IMR-90 (cell line): ENCODE measurements at regions of chr22 and their contacts with region 1.

Region 1: DNA sequence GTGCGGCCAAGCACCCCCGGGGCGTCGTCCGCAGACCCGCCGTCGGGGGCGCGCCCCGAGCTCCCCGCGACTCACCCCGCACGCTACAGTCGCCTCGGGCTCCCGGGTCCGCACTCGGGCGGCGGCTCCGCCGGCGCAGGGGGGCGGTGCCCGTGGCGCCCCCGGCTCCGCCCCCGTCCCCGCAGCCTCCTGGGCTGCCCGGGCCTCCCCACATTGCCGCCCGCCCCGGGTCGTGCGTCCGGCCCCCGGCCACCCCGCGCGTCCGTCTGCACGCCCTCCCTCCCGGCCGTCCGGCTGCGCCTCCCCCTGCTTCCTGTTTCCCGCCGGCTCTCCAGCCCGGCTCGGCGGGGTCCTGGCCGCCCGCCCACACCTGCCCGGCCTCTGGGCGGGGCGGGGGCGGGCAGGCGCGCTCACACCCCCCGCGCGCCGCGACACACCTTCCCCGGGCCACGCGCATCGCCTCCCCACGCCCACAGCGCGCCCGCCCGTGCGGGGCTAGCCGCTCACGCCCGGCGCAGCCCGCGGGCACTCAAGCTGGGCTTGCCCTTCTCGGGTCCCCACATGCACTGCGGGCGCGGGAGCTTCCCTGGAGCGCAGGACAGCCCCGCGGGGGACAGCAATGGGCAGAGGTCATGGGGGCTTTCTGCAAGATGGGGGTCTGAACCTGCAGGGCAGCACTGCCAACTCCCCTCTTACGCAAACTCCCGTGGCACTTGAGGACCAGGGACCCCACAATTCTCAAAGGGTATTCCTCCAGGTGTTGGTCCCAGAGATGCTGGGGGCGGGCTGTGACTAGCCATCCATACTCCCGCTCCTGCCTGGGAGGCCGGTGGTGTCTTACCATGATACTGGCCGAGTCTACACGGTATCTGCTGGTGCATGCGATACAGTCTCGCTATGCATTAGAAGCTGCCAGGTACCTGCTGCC is at the start of gene CARD10:
- DNase-seq: no peak
- ATAC-seq: peak; percentile 83
- H3K4me3 ChIP-seq: peak within 1 kb of the TSS; percentile 86
- H3K27ac ChIP-seq: peak within 1 kb of the TSS; percentile 12; the same call in 1 of the 2 replicates
- H3K4me1 ChIP-seq: peaks cover 9% of the 10 kb centered on the region
- H3K27me3 ChIP-seq: no peaks in the 10 kb centered on the region
- CTCF ChIP-seq: no peak
- POLR2A ChIP-seq: 0 out of 2 replicates have a peak, but pooled peaks have one; percentile 28
- RAD21 ChIP-seq: no peak
- total RNA-seq, gene CARD10: 6.1 TPM in 2 replicates

Region 2: GRCh38 chr22:37472418-37473006 is 47.0 kb before region 1 on chr22:
- CTCF ChIA-PET with region 1: interaction called, 3 read pairs
- POLR2A ChIA-PET with region 1: no interaction called
- dilution Hi-C with region 1: no loop called
- in situ Hi-C with region 1: no loop called
- intact Hi-C with region 1: loop called (anchors 1 kb)
- DNase-seq: peak; percentile 28
- ATAC-seq: peak; percentile 50; the same call in 1 of the 2 replicates
- H3K4me3 ChIP-seq: no peak overlapping the region
- H3K27ac ChIP-seq: no peak overlapping the region
- H3K4me1 ChIP-seq: no peaks in the 10 kb centered on the region
- H3K27me3 ChIP-seq: peaks cover 71% of the 10 kb centered on the region
- CTCF ChIP-seq: peak; percentile 60
- POLR2A ChIP-seq: no peak
- RAD21 ChIP-seq: peak; percentile 58

Region 3: GRCh38 chr22:37487571-37487970 is 32.0 kb before region 1 on chr22:
- CTCF ChIA-PET with region 1: no interaction called
- POLR2A ChIA-PET with region 1: no interaction called
- dilution Hi-C with region 1: no loop called
- in situ Hi-C with region 1: no loop called
- intact Hi-C with region 1: loop called (anchors 1 kb)
- DNase-seq: no peak
- ATAC-seq: no peak
- H3K4me3 ChIP-seq: no peak overlapping the region
- H3K27ac ChIP-seq: no peak overlapping the region
- H3K4me1 ChIP-seq: peaks cover 11% of the 10 kb centered on the region
- H3K27me3 ChIP-seq: no peaks in the 10 kb centered on the region
- CTCF ChIP-seq: no peak
- POLR2A ChIP-seq: no peak
- RAD21 ChIP-seq: no peak

Region 4: GRCh38 chr22:37623075-37624016 is 103.8 kb after region 1 on chr22:
- CTCF ChIA-PET with region 1: no interaction called
- POLR2A ChIA-PET with region 1: no interaction called
- dilution Hi-C with region 1: no loop called
- in situ Hi-C with region 1: no loop called
- intact Hi-C with region 1: no loop called
- DNase-seq: peak; percentile 43
- ATAC-seq: peak; percentile 94
- H3K4me3 ChIP-seq: no peak overlapping the region
- H3K27ac ChIP-seq: peak overlapping the region; percentile 9; the same call in 1 of the 2 replicates
- H3K4me1 ChIP-seq: peaks cover 3% of the 10 kb centered on the region; the same call in 1 of the 2 replicates
- H3K27me3 ChIP-seq: no peaks in the 10 kb centered on the region
- CTCF ChIP-seq: peak; percentile 70
- POLR2A ChIP-seq: no peak
- RAD21 ChIP-seq: peak; percentile 65